Calu3 (cell line): ENCODE measurements at regions of chr1 and their contacts with region 1.

Region 1: DNA sequence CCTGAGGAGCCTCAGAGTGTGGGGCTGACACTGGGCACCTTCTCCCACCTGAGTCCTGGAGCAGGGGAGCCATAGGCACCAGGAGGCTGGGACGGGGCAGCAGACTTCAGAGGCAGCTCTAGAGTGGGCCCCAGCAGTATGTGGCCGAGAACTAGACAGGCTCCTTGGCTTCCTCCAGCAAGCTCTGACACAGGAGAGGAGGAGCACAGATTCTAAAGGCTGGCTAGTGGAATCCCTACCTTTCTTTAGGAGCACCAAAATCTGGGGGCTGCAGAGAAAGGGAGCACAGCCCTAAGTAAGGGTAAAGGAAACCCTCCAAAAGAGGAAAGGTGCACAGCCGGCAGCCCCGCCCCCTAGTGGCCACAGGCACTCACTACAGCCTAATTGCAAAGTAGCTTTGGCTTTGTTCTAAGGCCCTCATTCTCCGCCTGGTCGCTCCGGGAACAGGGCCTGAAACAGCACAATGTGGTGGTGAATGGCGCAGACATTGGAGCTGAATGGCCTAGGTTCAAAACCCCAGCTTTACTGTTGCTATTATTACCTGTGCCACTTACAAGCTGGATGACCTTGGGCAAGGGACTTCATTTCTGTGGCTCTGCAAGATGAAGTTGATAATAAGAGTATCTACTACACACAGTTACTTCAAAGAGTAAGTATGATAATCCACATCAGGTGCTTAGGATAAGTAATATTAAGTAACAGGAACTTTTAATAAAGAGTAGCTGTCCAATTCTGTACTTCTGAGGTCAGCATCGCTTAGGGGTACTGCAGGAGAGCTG is 8.8 kb upstream of the GUCA2A start:
- DNase-seq: peak; percentile 76
- H3K4me3 Mint-ChIP-seq: no peak overlapping the region
- H3K27ac Mint-ChIP-seq: no peak overlapping the region
- H3K4me1 Mint-ChIP-seq: peaks cover 23% of the 10 kb centered on the region
- H3K27me3 Mint-ChIP-seq: no peaks in the 10 kb centered on the region
- CTCF ChIP-seq: peak; percentile 97

Region 2: GRCh38 chr1:42146626-42147320 is 26.6 kb before region 1 on chr1:
- CTCF ChIA-PET with region 1: interaction called, 8 read pairs
- intact Hi-C with region 1: loop called (anchors 2 kb)
- DNase-seq: peak; percentile 91
- H3K4me3 Mint-ChIP-seq: no peak overlapping the region
- H3K27ac Mint-ChIP-seq: no peak overlapping the region
- H3K4me1 Mint-ChIP-seq: peaks cover 7% of the 10 kb centered on the region
- H3K27me3 Mint-ChIP-seq: peaks cover 49% of the 10 kb centered on the region
- CTCF ChIP-seq: peak; percentile 88

Region 3: DNA sequence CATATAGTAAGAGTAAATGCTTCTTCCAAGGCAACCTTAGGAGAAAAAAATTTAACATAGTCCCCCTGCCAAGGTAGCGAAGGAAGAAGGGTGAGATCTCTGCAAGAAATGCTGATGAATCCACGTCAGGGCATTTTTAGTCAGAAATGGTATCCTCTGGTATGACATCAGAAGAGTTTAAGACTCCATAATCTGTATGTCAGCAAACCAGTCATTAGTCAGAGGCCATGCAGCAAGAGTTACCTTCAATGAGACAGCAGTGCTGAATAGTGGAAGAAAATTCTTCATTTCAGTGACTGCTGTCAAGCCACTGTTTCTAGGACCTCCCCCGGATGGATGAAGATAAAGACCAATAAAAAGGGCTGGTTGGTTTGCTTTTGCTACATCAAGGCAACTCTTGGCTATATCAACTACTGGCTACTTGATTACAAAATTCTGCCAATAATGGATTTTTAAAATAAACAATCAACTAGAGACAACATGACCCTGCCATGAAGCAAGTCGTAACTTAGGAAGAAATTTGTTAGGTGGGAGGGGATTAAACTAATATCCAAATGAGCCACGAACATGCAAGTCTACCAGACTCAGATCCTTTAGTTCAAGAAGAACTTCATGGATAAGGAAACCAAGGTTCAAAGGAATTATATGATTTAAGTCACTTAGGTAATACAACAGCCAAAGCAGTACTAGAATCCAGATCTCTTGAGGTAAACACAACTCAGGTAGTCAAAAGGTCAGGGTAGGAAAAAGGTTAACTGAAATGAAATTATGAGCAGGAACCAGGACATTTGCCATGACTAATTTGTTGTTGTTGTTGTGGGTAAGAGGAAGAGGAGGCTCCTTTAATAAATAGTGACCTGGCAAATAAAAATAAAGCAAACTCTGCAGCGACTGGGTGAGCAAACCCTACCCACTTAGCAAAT is 16.8 kb after region 1 on chr1:
- CTCF ChIA-PET with region 1: no interaction called
- intact Hi-C with region 1: no loop called
- DNase-seq: no peak
- H3K4me3 Mint-ChIP-seq: no peak overlapping the region
- H3K27ac Mint-ChIP-seq: no peak overlapping the region
- H3K4me1 Mint-ChIP-seq: no peaks in the 10 kb centered on the region
- H3K27me3 Mint-ChIP-seq: no peaks in the 10 kb centered on the region
- CTCF ChIP-seq: no peak

Region 4: DNA sequence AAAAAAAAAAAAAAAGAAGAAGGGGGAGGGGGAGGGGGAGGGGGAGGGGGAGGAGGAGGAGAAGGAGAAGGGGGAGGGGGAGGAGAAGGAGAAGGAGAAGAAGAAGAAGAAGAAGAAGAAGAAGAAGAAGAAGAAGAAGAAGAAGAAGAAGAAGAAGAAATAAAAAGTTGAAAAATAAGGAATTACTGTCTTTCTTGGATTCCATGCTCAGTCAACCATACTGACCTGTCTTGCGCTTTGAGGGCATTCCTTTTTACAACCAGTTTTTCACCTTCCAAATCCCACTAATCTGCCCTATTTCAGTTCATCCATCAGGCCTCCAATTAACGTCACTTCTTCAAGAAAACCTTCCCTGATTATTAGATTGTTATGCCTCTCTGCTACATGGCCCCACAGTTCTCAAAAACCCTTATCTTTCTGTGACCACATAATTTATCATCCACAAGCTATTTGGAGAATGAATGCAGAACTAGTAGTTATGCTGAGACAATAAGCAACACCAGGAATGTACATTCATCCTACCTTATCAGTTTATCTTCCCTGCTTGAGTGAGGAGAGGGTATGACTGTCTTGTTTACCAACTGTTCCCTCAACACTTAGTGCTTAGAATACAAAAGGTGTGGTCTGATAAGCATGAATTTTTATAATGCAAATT is 48.7 kb after region 1 on chr1:
- CTCF ChIA-PET with region 1: no interaction called
- intact Hi-C with region 1: no loop called
- DNase-seq: no peak
- H3K4me3 Mint-ChIP-seq: no peak overlapping the region
- H3K27ac Mint-ChIP-seq: peak overlapping the region; percentile 45
- H3K4me1 Mint-ChIP-seq: peaks cover 44% of the 10 kb centered on the region
- H3K27me3 Mint-ChIP-seq: no peaks in the 10 kb centered on the region
- CTCF ChIP-seq: no peak

Region 5: DNA sequence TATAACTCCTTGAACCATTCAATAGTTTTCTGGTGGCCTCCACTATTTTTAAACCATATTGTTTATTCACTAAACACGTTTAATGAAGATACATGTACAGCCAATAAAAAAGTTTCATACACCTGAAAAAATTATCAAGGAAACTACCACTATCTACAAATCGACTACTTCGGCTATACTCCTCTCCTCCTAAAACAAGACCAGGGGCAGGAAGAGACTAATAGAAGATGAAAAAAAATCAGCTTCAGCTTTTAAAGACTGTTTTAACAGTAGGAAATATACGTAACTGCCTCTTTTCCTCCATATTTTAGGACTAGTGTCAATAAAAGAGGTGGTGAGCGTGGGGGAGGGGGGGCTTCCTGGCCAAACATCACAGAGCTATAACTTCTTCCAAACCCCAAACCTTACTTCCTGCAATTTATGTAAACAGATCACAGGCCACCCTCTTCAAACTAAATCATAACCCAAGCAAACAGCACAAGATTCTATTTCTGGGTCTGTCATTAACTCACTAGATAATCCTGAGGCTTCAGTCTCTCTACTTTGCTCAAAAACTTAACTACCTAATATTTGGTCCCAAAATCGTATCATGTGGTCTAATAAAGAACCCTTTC is 146.6 kb after region 1 on chr1:
- CTCF ChIA-PET with region 1: no interaction called
- intact Hi-C with region 1: loop called (anchors 10 kb)
- DNase-seq: no peak
- H3K4me3 Mint-ChIP-seq: no peak overlapping the region
- H3K27ac Mint-ChIP-seq: no peak overlapping the region
- H3K4me1 Mint-ChIP-seq: peaks cover 58% of the 10 kb centered on the region
- H3K27me3 Mint-ChIP-seq: no peaks in the 10 kb centered on the region
- CTCF ChIP-seq: no peak

Region 6: DNA sequence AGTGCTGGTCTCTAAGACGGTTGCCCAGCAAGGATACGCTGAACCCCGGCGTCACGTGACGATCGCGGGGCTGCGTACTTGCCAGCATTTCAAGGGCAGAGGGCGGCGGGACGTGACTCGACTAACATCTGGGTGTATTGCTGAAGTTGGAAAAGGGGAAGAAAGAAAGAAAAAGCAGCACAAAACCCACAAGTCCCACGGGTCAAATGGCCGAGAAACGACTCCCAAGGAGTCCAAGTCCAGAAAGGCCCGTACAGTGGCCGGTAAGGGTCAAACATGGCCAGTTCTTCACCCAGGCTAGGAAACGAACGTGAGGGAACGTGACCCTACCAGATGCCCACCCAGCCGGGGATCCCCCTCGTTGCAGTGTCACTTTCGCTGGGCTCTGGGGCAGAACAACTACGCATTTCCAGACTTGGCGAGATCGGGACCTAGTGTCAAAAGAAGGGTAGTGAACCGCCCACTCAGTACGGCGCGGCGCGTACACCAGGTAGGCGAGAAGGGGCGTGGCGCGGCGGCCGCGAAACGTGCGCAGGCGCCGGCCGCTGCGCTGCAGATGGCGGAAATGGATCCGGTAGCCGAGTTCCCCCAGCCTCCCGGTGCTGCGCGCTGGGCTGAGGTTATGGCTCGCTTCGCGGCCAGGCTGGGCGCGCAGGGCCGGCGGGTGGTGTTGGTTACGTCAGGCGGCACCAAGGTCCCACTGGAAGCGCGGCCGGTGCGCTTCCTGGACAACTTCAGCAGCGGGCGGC is 282.8 kb after region 1 on chr1 and contains the starts of genes PPCS and ZMYND12:
- CTCF ChIA-PET with region 1: no interaction called
- intact Hi-C with region 1: loop called (anchors 5 kb)
- DNase-seq: peak; percentile 86
- H3K4me3 Mint-ChIP-seq: peak within 1 kb of the TSS; percentile 77
- H3K27ac Mint-ChIP-seq: peak within 1 kb of the TSS; percentile 75
- H3K4me1 Mint-ChIP-seq: peaks cover 21% of the 10 kb centered on the region
- H3K27me3 Mint-ChIP-seq: no peaks in the 10 kb centered on the region
- CTCF ChIP-seq: no peak
- total RNA-seq, gene PPCS: 67.8 and 72.8 TPM in 2 replicates
- total RNA-seq, gene ZMYND12: 0.83 and 1.1 TPM in 2 replicates